Activated naive CD4-positive, alpha-beta T cell treated with anti-CD3 and anti-CD28 coated beads, Interleukin-2, amount 10 ng/mL, durations not matched to agents 7 days and 5 days (primary cell): ENCODE measurements at regions of chr6 and their contacts with region 1.

Region 1: GRCh38 chr6:7276199-7276524 is 36.8 kb downstream of the SSR1 start:
- DNase-seq: no peak
- H3K4me3 Mint-ChIP-seq: no peak overlapping the region
- H3K27ac Mint-ChIP-seq: no peak overlapping the region
- H3K4me1 Mint-ChIP-seq: no peaks in the 10 kb centered on the region
- H3K27me3 Mint-ChIP-seq: peaks cover 5% of the 10 kb centered on the region

Region 2: DNA sequence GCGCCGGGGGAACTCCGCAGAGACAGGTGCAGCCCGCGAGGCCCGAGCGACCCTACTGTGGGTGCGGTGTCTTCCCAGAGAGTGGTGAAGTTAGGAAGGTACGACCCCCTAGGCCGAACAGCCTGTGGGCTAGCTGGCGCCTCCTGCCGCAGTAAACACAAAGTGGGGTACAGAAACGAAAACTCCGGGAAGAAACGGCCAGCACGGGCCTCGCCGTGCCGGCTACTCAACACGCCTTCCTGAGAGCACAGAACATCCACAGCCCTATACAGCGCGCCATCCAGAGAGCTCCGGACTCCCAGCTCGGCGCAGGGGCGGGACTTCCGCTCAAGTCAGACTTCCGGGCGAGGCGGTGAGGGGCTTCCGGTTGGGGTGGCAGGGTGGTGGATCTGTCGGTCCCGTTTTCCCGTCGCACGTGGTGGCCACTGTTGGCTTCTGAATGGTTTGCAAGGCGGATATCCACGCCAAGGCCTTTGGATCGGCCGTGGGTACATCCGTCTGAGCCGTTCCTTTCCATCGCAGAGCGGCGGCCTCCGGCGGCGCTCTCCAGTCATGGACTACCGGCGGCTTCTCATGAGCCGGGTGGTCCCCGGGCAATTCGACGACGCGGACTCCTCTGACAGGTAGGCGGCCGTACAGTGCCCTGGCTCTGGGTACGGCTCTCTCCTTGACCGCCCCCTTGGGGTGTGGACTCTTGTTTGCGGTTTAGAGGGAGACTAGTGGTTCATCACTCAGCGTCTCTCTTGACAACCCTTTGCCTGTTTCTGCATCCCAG is 113.5 kb after region 1 on chr6 and contains the starts of genes CAGE1 and RIOK1:
- CTCF ChIA-PET with region 1: interaction called, 14 read pairs
- DNase-seq: peak; percentile 97
- H3K4me3 Mint-ChIP-seq: peak within 1 kb of the TSS; percentile 81
- H3K27ac Mint-ChIP-seq: peak within 1 kb of the TSS; percentile 97
- H3K4me1 Mint-ChIP-seq: peaks cover 49% of the 10 kb centered on the region
- H3K27me3 Mint-ChIP-seq: peaks cover 3% of the 10 kb centered on the region

Region 3: GRCh38 chr6:7615611-7616383 is 339.6 kb after region 1 on chr6:
- CTCF ChIA-PET with region 1: interaction called, 25 read pairs
- DNase-seq: peak; percentile 57
- H3K4me3 Mint-ChIP-seq: no peak overlapping the region
- H3K27ac Mint-ChIP-seq: no peak overlapping the region
- H3K4me1 Mint-ChIP-seq: peaks cover 15% of the 10 kb centered on the region
- H3K27me3 Mint-ChIP-seq: peaks cover 9% of the 10 kb centered on the region